GM23248 (cell line): ENCODE measurements at regions of chr2 and their contacts with region 1.

Region 1: GRCh38 chr2:36561237-36561944 is 36.6 kb downstream of the FEZ2 start:
- DNase-seq: peak; percentile 97
- H3K4me3 ChIP-seq: peak overlapping the region; percentile 57
- H3K27ac ChIP-seq: peak overlapping the region; percentile 91
- H3K4me1 ChIP-seq: peaks cover 80% of the 10 kb centered on the region
- H3K27me3 ChIP-seq: no peaks in the 10 kb centered on the region

Region 2: GRCh38 chr2:36338817-36339125 is 222.6 kb before region 1 on chr2:
- in situ Hi-C with region 1: no loop called
- DNase-seq: peak; percentile 72
- H3K4me3 ChIP-seq: peak overlapping the region; percentile 20
- H3K27ac ChIP-seq: peak overlapping the region; percentile 58
- H3K4me1 ChIP-seq: peaks cover 39% of the 10 kb centered on the region
- H3K27me3 ChIP-seq: no peaks in the 10 kb centered on the region

Region 3: DNA sequence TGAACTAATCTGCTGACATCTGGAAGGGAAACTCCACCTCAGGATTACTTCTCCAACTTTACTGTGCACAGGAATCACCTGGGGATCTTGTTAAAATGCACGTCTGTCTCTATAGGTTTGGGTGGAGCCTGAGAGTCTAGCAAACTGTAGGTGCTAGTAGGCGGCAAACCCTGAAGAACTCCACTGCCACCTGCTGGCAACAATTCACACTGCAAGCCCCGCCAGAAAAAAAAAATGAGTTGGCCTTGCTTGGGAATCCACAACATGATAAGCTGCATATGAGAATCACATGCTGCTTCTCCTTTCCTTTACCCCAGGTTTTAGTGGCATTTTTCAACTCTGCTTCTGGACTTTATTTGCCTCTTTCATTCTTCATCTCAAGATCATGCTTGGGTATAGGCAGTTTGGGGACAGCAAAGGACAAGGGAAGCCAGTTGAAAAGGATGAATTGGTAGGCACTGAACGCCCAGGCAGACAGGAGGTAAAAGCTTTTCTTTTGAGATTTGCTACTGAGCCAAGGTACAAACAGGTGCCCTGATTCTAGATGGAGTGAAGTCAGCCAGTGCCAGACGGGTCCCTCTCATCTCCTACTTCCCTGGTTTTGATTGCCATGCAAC is 223.9 kb after region 1 on chr2:
- in situ Hi-C with region 1: loop called (anchors 25 kb)
- DNase-seq: peak; percentile 64
- H3K4me3 ChIP-seq: no peak overlapping the region
- H3K27ac ChIP-seq: no peak overlapping the region
- H3K4me1 ChIP-seq: peaks cover 8% of the 10 kb centered on the region; the same call in 1 of the 2 replicates
- H3K27me3 ChIP-seq: no peaks in the 10 kb centered on the region; the same call in 1 of the 2 replicates